Activated naive CD4-positive, alpha-beta T cell treated with anti-CD3 and anti-CD28 coated beads, Interleukin-2, amount 10 ng/mL, durations not matched to agents 7 days and 5 days (primary cell): ENCODE measurements at regions of chr6 and their contacts with region 1.

Region 1: DNA sequence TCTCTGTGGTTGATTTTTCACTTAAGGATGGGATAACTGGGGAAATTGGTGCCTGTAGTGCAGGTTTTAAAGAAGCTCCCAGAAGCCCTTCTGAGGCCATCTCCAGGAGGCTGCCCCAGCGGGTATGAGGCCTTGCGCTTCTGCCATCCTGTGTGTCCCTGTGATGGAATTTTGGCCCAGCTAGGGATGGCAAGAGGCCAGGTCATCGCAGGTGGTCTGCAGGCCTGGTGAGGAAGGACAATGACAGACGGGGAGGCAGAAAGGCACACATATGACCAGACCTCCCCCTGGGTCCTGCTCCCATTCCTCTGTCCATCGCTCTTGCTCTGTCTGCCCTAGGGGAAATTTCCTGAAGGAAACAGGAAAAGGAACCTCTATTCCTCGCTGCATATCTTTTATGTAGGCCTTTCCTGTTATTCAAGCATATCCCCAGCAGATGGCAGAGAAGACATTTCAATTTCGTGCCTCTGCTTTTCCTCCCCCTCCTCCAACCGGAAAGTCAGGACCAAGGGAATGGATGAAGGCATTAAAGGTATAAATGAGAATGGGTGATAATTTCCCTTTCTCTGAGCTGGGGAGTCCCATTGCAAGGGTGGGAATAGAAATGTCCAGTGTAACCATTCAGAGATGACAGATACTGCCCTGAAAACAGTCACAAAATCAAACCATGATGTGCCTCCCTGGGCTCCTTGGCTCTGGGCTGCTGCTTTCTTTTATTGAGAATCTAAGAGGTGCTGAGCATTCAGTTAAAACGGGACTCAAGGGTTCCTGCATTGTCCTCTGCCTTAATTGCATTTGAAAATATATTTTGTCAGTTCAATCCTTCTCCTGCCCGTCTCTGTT is 17.6 kb upstream of the HLA-F start:
- DNase-seq: peak; percentile 42
- H3K4me3 Mint-ChIP-seq: no peak overlapping the region
- H3K27ac Mint-ChIP-seq: no peak overlapping the region
- H3K4me1 Mint-ChIP-seq: peaks cover 53% of the 10 kb centered on the region
- H3K27me3 Mint-ChIP-seq: peaks cover 38% of the 10 kb centered on the region

Region 2: DNA sequence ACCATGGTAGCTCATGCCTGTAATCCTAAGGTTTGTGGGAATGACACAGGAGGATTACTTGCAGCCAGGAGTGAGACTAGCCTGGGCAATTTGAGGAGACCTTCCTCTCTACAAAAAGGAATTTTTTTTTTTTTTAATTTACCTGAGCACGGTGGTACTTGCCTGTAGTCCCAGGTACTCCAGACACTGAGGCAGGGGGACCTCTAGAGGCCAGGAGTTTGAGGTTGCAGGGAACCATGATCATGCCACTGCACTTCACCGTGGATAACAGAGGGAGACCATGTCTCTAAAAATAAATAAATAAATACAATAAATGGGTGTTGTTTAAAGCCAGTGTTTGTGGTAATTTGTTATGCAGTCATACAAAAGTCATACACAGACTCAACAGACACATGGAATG is 15.3 kb after region 1 on chr6:
- CTCF ChIA-PET with region 1: interaction called, 17 read pairs
- DNase-seq: peak; percentile 55
- H3K4me3 Mint-ChIP-seq: no peak overlapping the region
- H3K27ac Mint-ChIP-seq: no peak overlapping the region
- H3K4me1 Mint-ChIP-seq: peaks cover 35% of the 10 kb centered on the region
- H3K27me3 Mint-ChIP-seq: peaks cover 11% of the 10 kb centered on the region

Region 3: DNA sequence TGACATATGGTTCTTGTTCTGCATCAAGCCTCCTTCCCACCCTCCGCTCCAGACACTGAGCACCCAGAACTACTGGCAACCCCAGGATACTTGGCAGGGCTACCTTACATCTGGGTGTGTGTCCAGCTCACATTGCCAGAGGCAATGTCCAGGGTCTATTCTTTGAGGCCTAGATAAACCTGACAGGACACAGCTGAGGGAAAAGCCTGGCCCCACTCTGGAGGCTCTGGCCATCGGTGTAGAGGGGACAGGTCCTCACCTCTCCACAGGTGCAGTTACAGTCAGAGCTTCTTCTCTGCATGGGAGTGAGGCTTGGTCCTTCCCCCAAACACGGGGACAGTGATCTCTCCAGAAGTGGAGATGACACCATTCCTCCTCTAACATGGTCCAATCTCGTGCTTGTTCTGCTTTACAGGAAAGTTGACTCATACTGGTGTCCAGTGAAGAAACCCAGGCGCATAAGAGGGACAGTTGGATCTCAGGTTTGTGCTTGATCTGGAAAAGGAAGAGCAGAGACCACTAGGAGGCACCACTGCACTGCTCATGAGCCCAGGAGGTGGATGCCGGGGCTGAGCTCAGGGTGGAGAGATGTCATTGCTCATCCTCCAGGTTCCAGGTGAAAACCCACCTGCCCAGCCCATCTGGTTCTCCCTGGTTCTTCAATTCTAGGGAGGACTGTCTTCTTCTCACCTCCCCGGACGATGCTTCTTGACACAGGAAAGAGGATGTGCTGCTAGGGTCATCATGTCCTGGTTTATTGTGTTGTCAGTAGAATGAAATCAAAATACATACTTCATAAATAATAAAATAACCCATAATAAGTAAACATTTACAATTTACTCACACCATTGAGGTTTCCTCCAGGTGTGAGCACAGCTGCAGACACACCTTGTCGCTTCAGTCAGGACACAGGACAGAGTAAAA is 32.4 kb after region 1 on chr6:
- CTCF ChIA-PET with region 1: interaction called, 59 read pairs
- DNase-seq: peak; percentile 85
- H3K4me3 Mint-ChIP-seq: no peak overlapping the region
- H3K27ac Mint-ChIP-seq: no peak overlapping the region
- H3K4me1 Mint-ChIP-seq: peaks cover 11% of the 10 kb centered on the region
- H3K27me3 Mint-ChIP-seq: no peaks in the 10 kb centered on the region

Region 4: DNA sequence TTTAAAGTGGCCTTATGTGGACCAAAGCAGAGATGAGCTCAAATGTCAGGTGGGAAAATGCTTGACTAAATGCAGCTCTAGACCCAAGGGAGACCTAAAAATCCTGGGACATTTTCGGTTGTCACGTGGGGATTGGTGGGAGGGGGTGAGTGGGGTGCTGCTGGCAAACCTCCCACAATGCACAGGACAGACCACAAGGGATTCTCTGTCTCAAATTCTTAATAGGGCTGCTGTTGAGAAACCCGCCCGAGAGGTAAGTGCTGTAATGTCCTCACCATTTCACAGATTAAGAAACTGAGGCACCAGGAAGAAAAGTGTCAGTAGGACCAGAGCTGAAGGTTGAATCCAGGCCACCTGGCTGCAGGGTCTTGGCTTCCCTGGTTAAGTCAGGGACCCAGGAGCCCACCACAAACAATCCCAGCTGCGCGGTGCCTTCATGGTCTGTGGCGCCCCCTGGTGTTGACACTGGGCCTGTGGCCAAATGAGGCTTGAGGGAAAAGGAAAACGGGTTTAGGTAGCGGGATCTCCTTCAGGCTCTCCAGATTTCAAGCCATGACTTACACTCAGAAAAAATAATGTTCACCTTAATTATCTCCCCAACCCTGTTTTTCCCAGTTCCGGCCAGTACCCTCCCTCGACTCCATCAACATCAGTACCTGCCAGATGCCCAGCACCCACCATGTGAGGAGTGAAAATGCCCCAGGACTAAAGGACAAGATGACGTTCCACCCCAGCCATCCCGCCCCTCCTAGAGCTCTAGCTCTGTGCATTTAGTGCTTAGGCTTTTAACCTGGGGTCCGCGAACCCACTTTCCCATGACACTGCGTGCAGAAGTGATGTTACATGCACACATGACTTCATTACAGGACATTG is 129.2 kb after region 1 on chr6:
- CTCF ChIA-PET with region 1: interaction called, 11 read pairs
- DNase-seq: peak; percentile 70
- H3K4me3 Mint-ChIP-seq: no peak overlapping the region
- H3K27ac Mint-ChIP-seq: no peak overlapping the region
- H3K4me1 Mint-ChIP-seq: peaks cover 8% of the 10 kb centered on the region
- H3K27me3 Mint-ChIP-seq: peaks cover 66% of the 10 kb centered on the region